ENCODE measurements at regions of chr15 and their contacts with region 1.

Region 1: DNA sequence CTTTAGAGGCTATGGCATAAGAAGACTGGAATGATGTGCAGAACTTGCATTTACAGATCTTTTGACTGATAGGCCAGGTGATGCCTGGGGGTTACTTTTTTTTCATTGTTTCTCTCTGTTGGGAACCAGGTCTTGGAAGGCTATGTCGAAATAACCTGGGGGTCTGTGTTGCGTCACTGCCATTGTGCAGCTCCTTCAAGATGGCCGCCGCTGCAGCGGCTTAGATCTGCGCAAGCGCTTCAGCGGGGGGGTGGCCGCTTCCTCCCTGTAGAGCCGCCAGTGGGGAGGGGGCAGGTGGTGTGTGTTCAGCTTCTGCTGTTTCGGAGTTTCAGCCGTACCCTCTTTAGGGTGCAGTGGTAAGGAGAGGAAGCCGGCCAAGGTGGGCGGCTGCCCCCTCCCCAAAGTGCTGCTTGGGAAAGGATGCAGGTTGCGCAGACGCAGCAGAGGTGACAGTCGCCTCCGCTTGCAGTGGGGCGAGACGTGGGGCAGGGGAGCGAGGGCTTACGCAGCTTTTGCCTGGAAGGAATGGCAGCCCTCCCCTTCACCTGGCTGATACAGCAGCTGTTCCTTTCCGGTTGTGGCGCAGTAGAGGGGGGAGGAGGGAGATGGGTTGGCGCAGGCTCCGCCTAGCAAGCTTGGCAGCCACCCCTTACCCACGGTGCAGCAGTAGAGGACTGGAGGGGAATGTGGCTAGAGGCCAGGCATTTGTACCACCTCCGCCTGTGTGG is 1.5 kb downstream of the SNRPN start:
- DNase-seq: peak; percentile 74
- ATAC-seq: peak; percentile 81
- H3K4me3 ChIP-seq: peak overlapping the region; percentile 95
- H3K27ac ChIP-seq: peak overlapping the region; percentile 96
- H3K4me1 ChIP-seq: 0 out of 2 replicates have a peak, but pooled peaks cover 1% of the 10 kb centered on the region
- H3K27me3 ChIP-seq: no peaks in the 10 kb centered on the region
- CTCF ChIP-seq: no peak
- POLR2A ChIP-seq: no peak
- RAD21 ChIP-seq: no peak

Region 2: GRCh38 chr15:24856397-24857390 is 99.6 kb before region 1 on chr15:
- CTCF ChIA-PET with region 1: no interaction called
- POLR2A ChIA-PET with region 1: no interaction called
- dilution Hi-C with region 1: no loop called
- in situ Hi-C with region 1: no loop called
- intact Hi-C with region 1: loop called (anchors 2 kb)
- DNase-seq: peak; percentile 79
- ATAC-seq: peak; percentile 78
- H3K4me3 ChIP-seq: peak overlapping the region; percentile 89
- H3K27ac ChIP-seq: peak overlapping the region; percentile 52; the same call in 1 of the 2 replicates
- H3K4me1 ChIP-seq: peaks cover 4% of the 10 kb centered on the region; the same call in 1 of the 2 replicates
- H3K27me3 ChIP-seq: no peaks in the 10 kb centered on the region
- CTCF ChIP-seq: no peak
- POLR2A ChIP-seq: no peak
- RAD21 ChIP-seq: no peak

Region 3: DNA sequence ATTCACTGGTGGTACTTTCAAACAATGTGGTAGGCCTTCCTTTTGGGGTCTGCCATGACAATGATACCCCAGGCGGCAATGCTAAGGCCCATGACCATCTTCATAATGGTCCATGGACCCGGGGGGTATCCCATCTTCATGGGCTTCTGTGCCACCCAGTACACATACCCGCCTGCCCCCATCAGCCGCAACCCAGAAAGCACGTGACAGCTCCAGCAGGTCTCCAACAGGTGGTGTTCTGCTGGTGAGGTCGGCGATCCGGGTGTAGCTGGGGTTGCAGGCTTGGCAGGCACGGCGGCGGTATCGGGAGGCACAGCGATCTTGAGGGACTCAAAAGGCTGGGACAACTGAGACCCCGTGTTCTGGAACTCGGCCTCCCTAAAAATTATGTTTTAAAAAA is 213.0 kb after region 1 on chr15:
- CTCF ChIA-PET with region 1: no interaction called
- POLR2A ChIA-PET with region 1: no interaction called
- dilution Hi-C with region 1: no loop called
- in situ Hi-C with region 1: no loop called
- intact Hi-C with region 1: no loop called
- DNase-seq: no peak
- ATAC-seq: no peak
- H3K4me3 ChIP-seq: no peak overlapping the region
- H3K27ac ChIP-seq: no peak overlapping the region
- H3K4me1 ChIP-seq: no peaks in the 10 kb centered on the region
- H3K27me3 ChIP-seq: no peaks in the 10 kb centered on the region
- CTCF ChIP-seq: no peak
- POLR2A ChIP-seq: no peak
- RAD21 ChIP-seq: no peak

Region 4: DNA sequence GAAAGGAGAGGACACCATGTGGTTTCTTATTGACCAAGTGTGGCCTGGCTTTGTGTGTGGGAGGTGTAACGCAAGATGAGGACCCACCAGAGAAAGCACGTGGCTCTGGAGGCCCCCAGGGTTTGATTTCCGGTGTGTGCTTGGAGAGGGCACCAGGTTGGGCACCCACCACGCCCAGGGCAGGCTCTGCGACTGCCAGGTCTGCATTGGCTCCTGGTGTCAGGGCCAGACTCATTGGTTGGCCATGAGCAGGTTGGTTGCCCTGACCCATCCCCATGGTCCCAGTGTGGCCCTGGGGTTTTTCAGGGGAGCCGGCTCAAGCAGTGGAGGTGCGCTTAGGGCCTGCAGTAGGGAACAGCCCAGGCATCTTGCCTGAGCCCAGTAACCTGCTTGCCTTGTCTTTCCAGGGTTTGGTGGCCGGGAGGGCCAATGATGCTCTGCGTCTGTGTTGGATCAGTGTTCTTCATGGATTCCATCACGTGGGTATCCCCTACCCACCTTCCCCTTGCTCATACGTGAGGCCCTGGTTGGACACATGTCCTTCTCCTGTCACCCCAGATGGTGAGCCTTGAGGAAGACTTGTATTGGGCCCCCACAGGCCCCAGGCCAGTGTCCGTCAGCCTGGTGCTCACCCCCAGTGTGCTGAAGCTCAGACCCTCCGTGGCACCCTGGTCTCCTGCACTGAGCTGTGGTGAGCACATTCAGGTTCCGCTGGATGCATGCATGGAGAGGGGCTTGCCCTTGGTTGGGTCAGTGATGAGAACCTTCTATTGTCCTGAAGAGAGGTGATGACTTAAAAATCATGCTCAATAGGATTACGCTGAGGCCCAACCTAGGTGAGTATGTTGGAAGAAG is 288.7 kb after region 1 on chr15:
- CTCF ChIA-PET with region 1: no interaction called
- POLR2A ChIA-PET with region 1: no interaction called
- dilution Hi-C with region 1: no loop called
- in situ Hi-C with region 1: no loop called
- intact Hi-C with region 1: no loop called
- DNase-seq: no peak
- ATAC-seq: no peak
- H3K4me3 ChIP-seq: no peak overlapping the region
- H3K27ac ChIP-seq: no peak overlapping the region
- H3K4me1 ChIP-seq: no peaks in the 10 kb centered on the region
- H3K27me3 ChIP-seq: no peaks in the 10 kb centered on the region
- CTCF ChIP-seq: no peak
- POLR2A ChIP-seq: no peak
- RAD21 ChIP-seq: no peak